Calu3 (cell line): ENCODE measurements at regions of chr19 and their contacts with region 1.

Region 1: DNA sequence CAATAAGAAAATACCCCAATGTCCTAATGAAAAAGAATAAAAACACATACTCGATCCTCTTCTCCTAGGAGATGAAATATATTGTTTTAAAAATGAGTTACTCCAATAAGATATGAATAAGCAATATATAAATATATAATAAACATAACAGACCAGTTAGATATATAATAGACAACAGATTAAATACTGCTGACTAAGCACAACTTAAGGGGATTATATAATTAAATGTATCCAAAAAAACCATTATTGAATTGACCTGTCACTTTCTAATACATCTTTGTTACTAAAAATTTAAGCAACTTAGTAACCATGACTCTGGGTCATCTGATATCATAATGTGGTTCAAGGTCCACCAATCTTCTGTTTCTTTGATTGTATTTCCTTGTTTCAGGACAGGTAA is 14.0 kb upstream of the ZNF780B start:
- DNase-seq: no peak
- H3K4me3 Mint-ChIP-seq: no peak overlapping the region
- H3K27ac Mint-ChIP-seq: no peak overlapping the region
- H3K4me1 Mint-ChIP-seq: no peaks in the 10 kb centered on the region
- H3K27me3 Mint-ChIP-seq: no peaks in the 10 kb centered on the region
- CTCF ChIP-seq: no peak

Region 2: DNA sequence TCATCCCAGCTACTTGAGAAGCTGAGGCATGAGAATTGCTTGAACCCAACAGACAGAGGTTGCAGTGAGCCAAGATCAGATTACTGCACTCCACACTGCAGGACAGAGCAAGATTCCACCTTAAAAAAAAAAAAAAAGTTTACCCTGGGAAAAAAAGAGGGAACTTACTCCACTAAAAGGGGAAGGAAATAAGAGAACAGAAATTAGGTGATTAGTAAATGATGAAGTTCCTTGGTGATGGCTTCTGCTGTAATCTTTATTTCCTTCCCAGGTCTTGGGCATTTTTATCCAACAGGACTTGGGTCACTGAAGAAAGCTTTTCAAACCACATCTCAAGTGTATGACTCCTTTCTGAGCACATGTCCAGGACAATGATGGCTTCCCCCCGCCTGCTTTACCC is 11.4 kb after region 1 on chr19:
- CTCF ChIA-PET with region 1: no interaction called
- intact Hi-C with region 1: loop called (anchors 1 kb)
- DNase-seq: no peak
- H3K4me3 Mint-ChIP-seq: no peak overlapping the region
- H3K27ac Mint-ChIP-seq: no peak overlapping the region
- H3K4me1 Mint-ChIP-seq: peaks cover 7% of the 10 kb centered on the region
- H3K27me3 Mint-ChIP-seq: no peaks in the 10 kb centered on the region
- CTCF ChIP-seq: no peak

Region 3: GRCh38 chr19:40285353-40286234 is 215.5 kb after region 1 on chr19:
- CTCF ChIA-PET with region 1: no interaction called
- intact Hi-C with region 1: no loop called
- DNase-seq: peak; percentile 98
- H3K4me3 Mint-ChIP-seq: peak overlapping the region; percentile 92
- H3K27ac Mint-ChIP-seq: peak overlapping the region; percentile 94
- H3K4me1 Mint-ChIP-seq: peaks cover 12% of the 10 kb centered on the region
- H3K27me3 Mint-ChIP-seq: no peaks in the 10 kb centered on the region
- CTCF ChIP-seq: no peak